Ascending aorta (tissue), 2 donors: ENCODE measurements at regions of chr11 and their contacts with region 1.

Region 1: DNA sequence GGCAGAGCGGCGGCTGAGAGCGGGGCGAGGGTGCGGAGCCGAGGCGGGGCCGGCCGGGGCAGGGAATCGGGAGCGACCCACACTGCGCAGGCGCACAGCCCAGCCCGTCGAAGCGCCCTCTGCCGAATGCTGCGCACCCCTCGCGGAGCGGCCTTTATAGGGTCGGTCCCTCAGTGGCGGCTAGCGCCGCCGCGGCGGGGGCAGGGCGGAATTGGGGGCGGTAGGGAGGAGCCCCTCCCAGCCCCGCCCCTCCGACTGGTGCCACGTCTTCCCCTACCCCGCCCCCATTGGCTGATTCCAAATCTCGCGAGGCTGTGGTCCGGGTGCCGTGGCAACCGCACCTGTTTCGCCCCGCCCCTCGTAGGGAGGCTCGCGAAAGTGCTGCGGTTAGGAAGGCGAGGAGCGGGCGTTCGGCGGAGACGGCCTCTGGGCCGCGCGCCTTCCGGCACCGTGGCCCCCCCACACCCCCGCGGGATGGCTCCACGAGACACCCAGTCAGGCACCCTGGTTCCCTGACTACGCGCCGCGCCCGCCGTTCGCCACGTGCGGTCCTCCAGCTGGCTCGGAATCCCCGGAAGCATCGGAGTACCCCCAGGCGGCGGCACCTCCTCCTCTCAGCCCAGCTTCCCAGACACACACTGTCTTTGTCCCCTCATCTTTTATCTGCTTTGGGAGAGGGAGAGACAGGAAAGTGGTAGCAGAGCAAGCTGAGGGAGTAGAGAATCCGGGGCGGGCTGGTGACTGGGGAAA is at the start of gene EHD1:
- DNase-seq: peak; percentile 91 to 99
- H3K4me3 ChIP-seq: peak within 1 kb of the TSS; percentile 67 to 93
- H3K27ac ChIP-seq: peak within 1 kb of the TSS; percentile 89 to 92
- H3K4me1 ChIP-seq: peaks cover 13 to 30% of the 10 kb centered on the region in 2 donors
- H3K27me3 ChIP-seq: no peaks in the 10 kb centered on the region
- CTCF ChIP-seq: peak; percentile 40 to 61 (median 56)
- total RNA-seq, gene EHD1: 216 TPM

Region 2: GRCh38 chr11:64864473-64865285 is 14.0 kb before region 1 on chr11:
- intact Hi-C with region 1: loop called (anchors 2 kb)
- DNase-seq: peak; percentile 87 to 96
- H3K4me3 ChIP-seq: peak overlapping the region; percentile 37 to 59
- H3K27ac ChIP-seq: peak overlapping the region; percentile 97 to 98
- H3K4me1 ChIP-seq: peaks cover 47 to 76% of the 10 kb centered on the region in 2 donors
- H3K27me3 ChIP-seq: no peaks in the 10 kb centered on the region
- CTCF ChIP-seq: no peak